WTC11 (cell line): ENCODE measurements at regions of chr5 and their contacts with region 1.

Region 1: DNA sequence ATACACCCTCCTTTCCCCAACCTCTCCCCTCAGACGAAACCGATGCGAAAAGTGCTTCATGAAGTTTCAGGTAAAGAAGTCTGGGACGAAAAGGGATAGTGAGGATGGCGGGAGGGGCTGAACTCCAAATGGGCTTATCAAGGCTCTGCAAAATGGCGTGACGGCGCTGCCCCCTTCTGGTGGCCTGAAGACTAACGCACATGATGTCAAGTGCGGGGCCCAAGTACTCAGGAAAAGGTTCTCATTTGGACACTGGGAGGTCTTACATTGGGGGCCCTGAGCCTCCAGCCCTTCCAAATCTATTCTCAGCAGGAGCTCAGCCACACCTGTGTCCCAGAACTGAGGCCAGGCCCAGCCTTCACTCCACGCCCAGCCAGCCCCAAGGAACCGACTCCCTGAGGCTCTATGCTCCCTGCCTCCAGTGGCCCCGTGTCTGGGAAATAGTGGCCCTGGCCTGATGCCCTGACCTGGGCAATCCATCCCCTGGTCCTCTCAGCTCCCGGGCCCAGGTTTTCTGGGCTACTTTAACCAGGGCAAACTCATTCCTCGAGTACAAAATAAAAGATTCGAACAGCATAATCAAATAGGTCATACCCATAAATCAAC is 119.9 kb downstream of the KCNIP1 start:
- DNase-seq: peak; percentile 82
- ATAC-seq: peak; percentile 89
- H3K4me3 Mint-ChIP-seq: no peak overlapping the region
- H3K27ac Mint-ChIP-seq: no peak overlapping the region
- H3K4me1 Mint-ChIP-seq: peaks cover 19% of the 10 kb centered on the region
- H3K27me3 Mint-ChIP-seq: peaks cover 11% of the 10 kb centered on the region
- CTCF ChIP-seq: peak; percentile 79

Region 2: GRCh38 chr5:170434966-170435605 is 188.6 kb before region 1 on chr5:
- CTCF ChIA-PET with region 1: interaction called, 30 read pairs
- POLR2A ChIA-PET with region 1: no interaction called
- DNase-seq: peak; percentile 78
- ATAC-seq: peak; percentile 91
- H3K4me3 Mint-ChIP-seq: no peak overlapping the region
- H3K27ac Mint-ChIP-seq: no peak overlapping the region
- H3K4me1 Mint-ChIP-seq: peaks cover 30% of the 10 kb centered on the region
- H3K27me3 Mint-ChIP-seq: no peaks in the 10 kb centered on the region; the same call in 1 of the 2 replicates
- CTCF ChIP-seq: peak; percentile 95

Region 3: DNA sequence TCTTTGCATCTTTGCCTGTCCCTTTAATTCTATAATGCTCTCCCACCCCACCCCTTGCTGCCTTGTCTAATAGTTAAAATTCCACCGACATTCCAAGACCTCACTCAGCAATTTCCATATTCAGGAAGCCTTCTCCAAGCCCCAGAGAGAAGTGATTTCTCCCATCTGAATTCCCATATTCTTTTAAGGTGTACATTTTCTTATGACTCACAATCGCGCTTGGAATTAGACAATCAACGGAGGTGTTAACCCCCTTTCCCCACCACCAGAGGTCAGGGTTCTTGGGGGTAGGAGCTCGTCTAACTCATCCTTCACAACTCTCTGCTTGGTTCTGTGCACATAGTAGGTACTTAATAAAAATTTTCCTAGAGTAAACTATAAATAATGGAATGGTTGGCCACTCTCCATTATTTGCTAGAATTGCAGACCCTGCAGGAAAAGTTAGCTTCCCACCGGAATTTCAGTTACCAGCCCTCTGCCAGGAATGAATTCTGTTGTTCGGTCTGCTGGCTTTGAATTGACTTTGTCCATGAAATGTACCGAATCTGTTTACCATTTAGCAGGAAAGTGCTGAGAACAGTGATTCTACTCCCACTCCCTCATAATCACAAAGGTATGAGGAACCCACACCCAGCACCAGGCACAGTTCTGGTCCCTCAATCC is 114.9 kb before region 1 on chr5:
- CTCF ChIA-PET with region 1: interaction called, 23 read pairs
- POLR2A ChIA-PET with region 1: no interaction called
- DNase-seq: no peak
- ATAC-seq: no peak
- H3K4me3 Mint-ChIP-seq: no peak overlapping the region
- H3K27ac Mint-ChIP-seq: no peak overlapping the region
- H3K4me1 Mint-ChIP-seq: peaks cover 15% of the 10 kb centered on the region
- H3K27me3 Mint-ChIP-seq: peaks cover 22% of the 10 kb centered on the region
- CTCF ChIP-seq: 0 out of 2 replicates have a peak, but pooled peaks have one; percentile 23

Region 4: GRCh38 chr5:170597109-170597751 is 26.4 kb before region 1 on chr5:
- CTCF ChIA-PET with region 1: interaction called, 14 read pairs
- POLR2A ChIA-PET with region 1: no interaction called
- DNase-seq: no peak
- ATAC-seq: no peak
- H3K4me3 Mint-ChIP-seq: no peak overlapping the region
- H3K27ac Mint-ChIP-seq: no peak overlapping the region
- H3K4me1 Mint-ChIP-seq: no peaks in the 10 kb centered on the region
- H3K27me3 Mint-ChIP-seq: no peaks in the 10 kb centered on the region
- CTCF ChIP-seq: no peak

Region 5: DNA sequence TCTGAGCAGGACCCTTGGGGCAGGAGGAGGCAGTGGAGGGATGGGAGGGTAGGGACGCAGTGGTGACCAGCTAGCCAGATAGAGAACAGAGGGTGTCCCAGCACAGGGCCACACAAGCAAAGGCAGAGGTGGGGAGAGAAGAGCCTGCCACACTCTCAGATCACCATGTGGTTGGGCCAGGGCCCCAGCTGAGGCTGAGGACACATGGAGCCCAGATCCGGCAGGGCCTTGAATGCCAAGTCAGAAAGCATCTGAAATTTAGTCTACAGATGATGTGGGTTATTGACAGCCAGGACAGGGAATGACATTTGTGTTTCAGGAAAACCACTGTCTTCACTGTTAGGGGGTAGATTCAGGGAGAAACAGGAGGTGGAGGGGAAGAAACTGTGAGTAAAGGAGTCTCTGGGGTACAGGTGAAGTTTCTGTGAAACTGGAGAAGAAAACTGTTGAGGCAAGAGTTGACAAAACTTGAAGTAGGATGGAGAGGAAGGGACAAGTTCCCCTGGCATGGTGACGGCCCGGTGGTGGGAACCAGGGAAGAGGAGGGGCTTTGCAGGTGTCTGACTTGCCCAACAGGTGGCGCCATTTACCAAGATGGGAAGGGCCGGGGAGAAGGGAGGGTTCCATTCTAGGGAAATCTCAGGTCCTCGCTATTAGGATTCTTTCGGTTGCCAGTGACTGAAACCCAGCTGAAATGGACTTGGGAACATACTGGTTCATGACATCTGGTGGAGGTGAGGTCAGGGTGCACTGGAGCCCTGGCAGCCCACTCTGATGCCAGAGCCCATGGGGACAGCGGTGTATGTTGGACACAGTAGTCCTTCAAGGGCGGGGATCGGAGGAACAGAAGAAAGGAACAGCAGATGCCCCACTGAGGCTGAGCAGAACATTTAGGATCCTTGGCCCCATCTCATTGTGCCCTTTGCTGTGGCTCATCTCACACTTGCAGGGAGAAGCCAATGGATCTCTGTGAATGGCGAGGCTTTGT is 19.8 kb before region 1 on chr5:
- CTCF ChIA-PET with region 1: interaction called, 15 read pairs
- POLR2A ChIA-PET with region 1: no interaction called
- DNase-seq: peak; percentile 90
- ATAC-seq: peak; percentile 95
- H3K4me3 Mint-ChIP-seq: no peak overlapping the region
- H3K27ac Mint-ChIP-seq: no peak overlapping the region
- H3K4me1 Mint-ChIP-seq: peaks cover 3% of the 10 kb centered on the region; the same call in 1 of the 2 replicates
- H3K27me3 Mint-ChIP-seq: peaks cover 17% of the 10 kb centered on the region
- CTCF ChIP-seq: peak; percentile 80

Region 6: GRCh38 chr5:170638454-170639220 is 15.0 kb after region 1 on chr5:
- CTCF ChIA-PET with region 1: interaction called, 18 read pairs
- POLR2A ChIA-PET with region 1: no interaction called
- DNase-seq: peak; percentile 96
- ATAC-seq: peak; percentile 88
- H3K4me3 Mint-ChIP-seq: peak overlapping the region; percentile 2; the same call in 1 of the 2 replicates
- H3K27ac Mint-ChIP-seq: no peak overlapping the region
- H3K4me1 Mint-ChIP-seq: peaks cover 46% of the 10 kb centered on the region
- H3K27me3 Mint-ChIP-seq: peaks cover 5% of the 10 kb centered on the region
- CTCF ChIP-seq: peak; percentile 92